PC-3 (cell line): ENCODE measurements at regions of chr9 and their contacts with region 1.

Region 1: GRCh38 chr9:6490863-6491262 is 77.9 kb downstream of the UHRF2 start:
- DNase-seq: no peak
- ATAC-seq: no peak
- H3K4me3 ChIP-seq: no peak overlapping the region
- H3K27ac ChIP-seq: no peak overlapping the region
- H3K4me1 ChIP-seq: no peaks in the 10 kb centered on the region
- H3K27me3 ChIP-seq: no peaks in the 10 kb centered on the region
- CTCF ChIP-seq: no peak

Region 2: DNA sequence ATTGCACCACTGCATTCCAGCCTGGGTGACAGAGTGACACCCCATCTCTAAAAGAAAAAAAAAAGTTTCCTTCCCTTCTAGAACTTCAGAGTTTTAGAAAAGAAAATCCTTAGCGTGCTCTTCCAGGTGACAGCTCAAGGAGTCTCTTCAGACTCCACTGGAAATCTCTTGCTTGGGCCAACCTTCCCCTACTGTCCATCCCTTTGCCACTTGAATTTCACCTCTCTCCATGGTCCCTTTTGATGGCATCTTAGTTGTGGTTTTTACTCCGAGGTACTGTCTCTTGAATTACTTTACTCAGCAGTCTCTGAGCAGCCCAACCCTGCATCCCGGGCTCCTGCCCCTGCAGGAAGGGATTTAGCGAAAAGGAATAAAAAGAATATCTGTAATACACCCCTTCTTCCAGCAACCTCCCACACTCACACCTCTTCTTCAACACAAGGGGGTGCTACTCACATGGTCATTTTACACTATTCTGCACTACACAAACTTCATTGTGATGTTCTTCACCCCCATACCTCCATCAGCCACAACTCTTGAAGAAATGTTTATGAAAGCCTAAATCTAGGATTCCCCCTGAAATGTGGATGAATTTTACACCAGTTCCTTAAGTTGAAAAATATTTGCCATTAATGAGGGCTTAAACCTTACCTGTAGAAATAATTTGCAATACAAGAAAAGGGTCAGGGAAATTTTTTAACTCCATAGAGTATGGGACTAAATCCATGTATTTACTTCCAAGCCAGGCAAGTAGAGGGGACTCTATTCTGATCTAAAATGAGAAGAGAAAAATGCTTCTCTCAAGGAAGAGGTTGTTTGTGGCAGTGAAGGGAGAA is 136.8 kb before region 1 on chr9:
- CTCF ChIA-PET with region 1: no interaction called
- POLR2A ChIA-PET with region 1: no interaction called
- intact Hi-C with region 1: loop called (anchors 5 kb)
- DNase-seq: peak; percentile 54
- ATAC-seq: peak; percentile 85
- H3K4me3 ChIP-seq: no peak overlapping the region
- H3K27ac ChIP-seq: no peak overlapping the region
- H3K4me1 ChIP-seq: peaks cover 21% of the 10 kb centered on the region
- H3K27me3 ChIP-seq: no peaks in the 10 kb centered on the region
- CTCF ChIP-seq: peak; percentile 73